ENCODE measurements at regions of chr1 and their contacts with region 1.

Region 1: DNA sequence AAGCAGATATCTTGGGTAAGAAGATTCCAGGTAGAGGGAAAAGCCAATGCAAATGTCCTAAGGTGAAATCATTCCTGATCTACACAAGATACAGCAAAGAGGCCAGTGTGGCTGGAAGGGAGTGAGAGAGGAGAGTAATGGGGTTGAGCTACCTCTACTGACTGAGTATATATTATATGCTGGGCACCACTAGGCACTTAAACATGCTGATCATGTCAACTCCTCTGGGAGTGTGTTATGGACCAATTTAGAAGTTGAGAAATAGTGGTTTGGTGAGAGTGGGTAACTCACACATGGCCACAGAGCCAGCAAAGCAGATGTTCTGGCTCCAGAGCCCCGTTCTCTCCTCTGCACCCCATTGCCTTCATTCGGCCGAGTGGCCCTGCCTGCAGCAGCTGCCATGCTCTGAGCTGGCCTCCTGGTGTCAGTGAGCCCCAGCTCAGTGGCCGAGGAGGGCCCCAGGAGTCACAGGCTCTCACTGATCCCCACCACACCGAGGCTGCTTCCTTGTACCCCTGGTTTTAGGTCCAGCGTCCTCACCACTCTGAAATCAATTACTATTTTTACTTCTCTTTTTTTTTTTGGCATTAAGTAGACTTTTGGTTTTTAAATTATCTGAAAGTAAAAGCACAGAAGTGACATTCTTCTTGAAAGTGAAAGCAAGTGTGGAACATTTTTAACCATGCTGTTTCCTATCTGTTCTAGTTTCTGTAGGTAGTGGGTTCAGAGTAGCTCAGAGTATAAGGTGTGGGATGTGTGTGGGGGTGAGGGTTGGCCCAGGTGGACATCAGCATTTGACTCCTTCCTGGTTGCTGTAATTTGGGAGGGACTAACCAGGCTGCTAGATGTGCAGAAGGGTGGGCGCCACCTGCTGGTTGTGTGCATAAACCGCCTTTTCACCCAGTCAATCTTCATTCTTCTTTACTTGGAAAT is 45.8 kb upstream of the CRNN start:
- DNase-seq: peak; percentile 57 to 89 (median 67)
- ATAC-seq: peak; percentile 59
- H3K4me3 ChIP-seq: peak overlapping the region; percentile 31
- H3K4me3 Mint-ChIP-seq: peak overlapping the region; percentile 80
- H3K27ac ChIP-seq: peak overlapping the region in 1 of 2 donors; percentile 5
- H3K27ac Mint-ChIP-seq: peak overlapping the region; percentile 75
- H3K4me1 ChIP-seq: peaks cover 14% of the 10 kb centered on the region
- H3K4me1 Mint-ChIP-seq: peaks cover 29% of the 10 kb centered on the region
- H3K27me3 ChIP-seq: no peaks in the 10 kb centered on the region
- H3K27me3 Mint-ChIP-seq: no peaks in the 10 kb centered on the region
- CTCF ChIP-seq: peak; percentile 76

Region 2: DNA sequence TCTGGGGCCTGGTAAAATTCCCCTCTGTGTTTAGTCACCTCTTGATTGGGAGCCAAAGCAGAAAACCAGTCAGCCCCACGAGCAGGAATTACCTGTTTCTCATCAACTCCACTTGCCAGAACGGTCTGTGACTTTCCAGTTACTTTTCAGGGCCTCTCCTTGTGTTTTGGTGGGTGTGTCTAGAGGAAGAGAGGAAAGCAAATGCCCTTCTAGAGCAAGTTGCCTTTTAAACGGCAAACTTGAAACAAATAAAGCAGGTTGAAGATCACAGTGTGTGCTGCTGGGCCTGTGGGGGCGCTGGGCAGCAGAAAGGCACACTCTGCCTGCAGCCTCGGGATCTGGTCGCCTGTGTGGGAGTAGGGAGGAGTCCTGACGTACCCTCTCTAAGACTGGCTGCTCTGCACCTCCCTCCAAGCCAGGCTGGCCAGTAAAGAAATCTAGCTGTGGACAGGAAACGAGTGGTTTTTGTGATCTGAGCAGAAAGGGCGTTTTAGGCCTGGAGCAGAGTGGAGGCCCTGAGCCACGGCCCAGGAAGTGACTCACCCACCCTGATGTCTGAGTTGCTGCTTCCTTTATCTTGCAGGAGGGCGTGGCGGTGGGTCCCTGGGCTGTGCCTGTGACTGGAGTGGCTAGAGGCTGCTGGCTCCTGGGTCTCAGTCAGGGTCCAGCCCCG is 412.0 kb before region 1 on chr1:
- CTCF ChIA-PET with region 1: interaction called, 20 read pairs
- POLR2A ChIA-PET with region 1: no interaction called
- intact Hi-C with region 1: loop called (anchors 1 to 2 kb)
- DNase-seq: peak; percentile 65 to 95 (median 84)
- ATAC-seq: peak; percentile 89
- H3K4me3 ChIP-seq: peak overlapping the region; percentile 26
- H3K4me3 Mint-ChIP-seq: peak overlapping the region; percentile 72
- H3K27ac ChIP-seq: peak overlapping the region; percentile 94 to 96
- H3K27ac Mint-ChIP-seq: peak overlapping the region; percentile 96
- H3K4me1 ChIP-seq: peaks cover 39% of the 10 kb centered on the region
- H3K4me1 Mint-ChIP-seq: peaks cover 31% of the 10 kb centered on the region
- H3K27me3 ChIP-seq: peaks cover 0 to under 1% of the 10 kb centered on the region in 2 experiments
- H3K27me3 Mint-ChIP-seq: peaks cover 4% of the 10 kb centered on the region
- CTCF ChIP-seq: peak; percentile 52

Region 3: GRCh38 chr1:152347116-152347728 is 112.6 kb before region 1 on chr1:
- CTCF ChIA-PET with region 1: interaction called, 9 read pairs
- POLR2A ChIA-PET with region 1: interaction called, 5 read pairs
- intact Hi-C with region 1: loop called (anchors 2 to 10 kb)
- DNase-seq: peak in 13 of 14 experiments; percentile 1 to 77 (median 34)
- ATAC-seq: peak; percentile 57
- H3K4me3 ChIP-seq: no peak overlapping the region
- H3K4me3 Mint-ChIP-seq: no peak overlapping the region
- H3K27ac ChIP-seq: no peak overlapping the region
- H3K27ac Mint-ChIP-seq: no peak overlapping the region
- H3K4me1 ChIP-seq: no peaks in the 10 kb centered on the region
- H3K4me1 Mint-ChIP-seq: no peaks in the 10 kb centered on the region
- H3K27me3 ChIP-seq: peaks cover 0 to 11% of the 10 kb centered on the region in 2 experiments
- H3K27me3 Mint-ChIP-seq: peaks cover 29% of the 10 kb centered on the region
- CTCF ChIP-seq: peak; percentile 96

Region 4: GRCh38 chr1:152367434-152367833 is 92.4 kb before region 1 on chr1:
- CTCF ChIA-PET with region 1: no interaction called
- POLR2A ChIA-PET with region 1: no interaction called
- intact Hi-C with region 1: no loop called
- DNase-seq: no peak
- ATAC-seq: no peak
- H3K4me3 ChIP-seq: no peak overlapping the region
- H3K4me3 Mint-ChIP-seq: no peak overlapping the region
- H3K27ac ChIP-seq: no peak overlapping the region
- H3K27ac Mint-ChIP-seq: no peak overlapping the region
- H3K4me1 ChIP-seq: no peaks in the 10 kb centered on the region
- H3K4me1 Mint-ChIP-seq: no peaks in the 10 kb centered on the region
- H3K27me3 ChIP-seq: peaks cover 3 to 6% of the 10 kb centered on the region in 2 experiments
- H3K27me3 Mint-ChIP-seq: peaks cover 19% of the 10 kb centered on the region
- CTCF ChIP-seq: no peak

Region 5: DNA sequence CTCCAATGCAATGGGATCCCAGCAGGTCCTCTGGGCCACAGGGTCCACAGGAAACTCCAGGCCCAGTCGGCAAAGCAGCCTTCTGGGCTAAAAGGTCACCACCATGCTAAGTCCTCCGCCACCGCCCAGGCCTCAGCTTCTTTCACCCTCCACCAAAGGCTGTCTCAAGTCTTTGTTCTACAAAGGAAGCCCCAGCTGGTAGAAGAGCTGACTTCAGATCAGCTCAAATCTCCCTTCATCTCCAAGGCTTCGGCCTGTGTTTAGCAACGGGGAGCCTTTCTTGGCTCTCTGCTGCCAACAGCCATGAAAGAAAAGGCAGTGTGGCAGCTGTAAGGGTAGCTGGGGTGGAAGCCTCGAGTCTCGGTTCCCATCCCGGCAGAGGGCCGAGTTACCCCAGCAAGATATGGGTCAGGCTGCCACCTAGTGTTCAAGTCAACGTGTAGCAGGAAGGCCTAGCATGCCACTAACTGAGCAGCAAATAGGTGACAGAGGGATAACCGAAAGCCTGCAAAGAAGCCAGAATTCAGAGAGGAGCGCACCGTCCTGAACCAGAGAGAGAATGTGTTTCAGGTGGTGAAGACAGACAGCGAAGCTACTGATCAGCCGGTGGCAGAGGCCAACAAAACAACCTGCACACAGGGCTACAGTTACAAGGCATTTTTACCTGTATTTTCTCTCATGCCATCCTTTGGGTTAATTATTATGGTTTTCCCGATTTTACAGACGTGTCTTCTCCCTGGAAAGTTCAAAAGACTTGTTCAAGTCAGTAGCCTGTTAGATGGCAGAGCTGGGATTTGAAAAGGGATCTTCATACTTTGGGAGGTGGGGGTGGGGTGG is 19.0 kb before region 1 on chr1:
- CTCF ChIA-PET with region 1: interaction called, 21 read pairs
- POLR2A ChIA-PET with region 1: interaction called, 6 read pairs
- intact Hi-C with region 1: loop called in 1 of 2 experiments (anchors 1 kb)
- DNase-seq: peak; percentile 48 to 87 (median 60)
- ATAC-seq: peak; percentile 99
- H3K4me3 ChIP-seq: no peak overlapping the region
- H3K4me3 Mint-ChIP-seq: no peak overlapping the region
- H3K27ac ChIP-seq: no peak overlapping the region
- H3K27ac Mint-ChIP-seq: no peak overlapping the region
- H3K4me1 ChIP-seq: peaks cover 7% of the 10 kb centered on the region
- H3K4me1 Mint-ChIP-seq: peaks cover 5% of the 10 kb centered on the region
- H3K27me3 ChIP-seq: peaks cover 0 to 4% of the 10 kb centered on the region in 2 experiments
- H3K27me3 Mint-ChIP-seq: peaks cover 21% of the 10 kb centered on the region
- CTCF ChIP-seq: peak; percentile 90

Region 6: GRCh38 chr1:152473887-152474537 is 14.2 kb after region 1 on chr1:
- CTCF ChIA-PET with region 1: interaction called, 10 read pairs
- POLR2A ChIA-PET with region 1: interaction called, 3 read pairs
- intact Hi-C with region 1: no loop called
- DNase-seq: no peak
- ATAC-seq: no peak
- H3K4me3 ChIP-seq: no peak overlapping the region
- H3K4me3 Mint-ChIP-seq: no peak overlapping the region
- H3K27ac ChIP-seq: no peak overlapping the region
- H3K27ac Mint-ChIP-seq: no peak overlapping the region
- H3K4me1 ChIP-seq: no peaks in the 10 kb centered on the region
- H3K4me1 Mint-ChIP-seq: no peaks in the 10 kb centered on the region
- H3K27me3 ChIP-seq: peaks cover 0 to 15% of the 10 kb centered on the region in 2 experiments
- H3K27me3 Mint-ChIP-seq: peaks cover 14% of the 10 kb centered on the region
- CTCF ChIP-seq: no peak

Region 7: GRCh38 chr1:152679459-152679858 is 219.6 kb after region 1 on chr1:
- CTCF ChIA-PET with region 1: no interaction called
- POLR2A ChIA-PET with region 1: no interaction called
- intact Hi-C with region 1: no loop called
- DNase-seq: no peak
- ATAC-seq: no peak
- H3K4me3 ChIP-seq: no peak overlapping the region
- H3K4me3 Mint-ChIP-seq: no peak overlapping the region
- H3K27ac ChIP-seq: no peak overlapping the region
- H3K27ac Mint-ChIP-seq: no peak overlapping the region
- H3K4me1 ChIP-seq: no peaks in the 10 kb centered on the region
- H3K4me1 Mint-ChIP-seq: no peaks in the 10 kb centered on the region
- H3K27me3 ChIP-seq: peaks cover 6 to 21% of the 10 kb centered on the region in 2 experiments
- H3K27me3 Mint-ChIP-seq: peaks cover 55% of the 10 kb centered on the region
- CTCF ChIP-seq: no peak

Measured in CD4-positive, alpha-beta T cell (primary cell).